ENCODE measurements at regions of chr7 and their contacts with region 1.

Region 1: GRCh38 chr7:77759294-77759889 is 38.8 kb downstream of the TMEM60 start:
- DNase-seq: peak; percentile 66
- H3K4me3 Mint-ChIP-seq: no peak overlapping the region
- H3K27ac Mint-ChIP-seq: no peak overlapping the region
- H3K4me1 Mint-ChIP-seq: peaks cover 12% of the 10 kb centered on the region
- H3K27me3 Mint-ChIP-seq: no peaks in the 10 kb centered on the region

Region 2: DNA sequence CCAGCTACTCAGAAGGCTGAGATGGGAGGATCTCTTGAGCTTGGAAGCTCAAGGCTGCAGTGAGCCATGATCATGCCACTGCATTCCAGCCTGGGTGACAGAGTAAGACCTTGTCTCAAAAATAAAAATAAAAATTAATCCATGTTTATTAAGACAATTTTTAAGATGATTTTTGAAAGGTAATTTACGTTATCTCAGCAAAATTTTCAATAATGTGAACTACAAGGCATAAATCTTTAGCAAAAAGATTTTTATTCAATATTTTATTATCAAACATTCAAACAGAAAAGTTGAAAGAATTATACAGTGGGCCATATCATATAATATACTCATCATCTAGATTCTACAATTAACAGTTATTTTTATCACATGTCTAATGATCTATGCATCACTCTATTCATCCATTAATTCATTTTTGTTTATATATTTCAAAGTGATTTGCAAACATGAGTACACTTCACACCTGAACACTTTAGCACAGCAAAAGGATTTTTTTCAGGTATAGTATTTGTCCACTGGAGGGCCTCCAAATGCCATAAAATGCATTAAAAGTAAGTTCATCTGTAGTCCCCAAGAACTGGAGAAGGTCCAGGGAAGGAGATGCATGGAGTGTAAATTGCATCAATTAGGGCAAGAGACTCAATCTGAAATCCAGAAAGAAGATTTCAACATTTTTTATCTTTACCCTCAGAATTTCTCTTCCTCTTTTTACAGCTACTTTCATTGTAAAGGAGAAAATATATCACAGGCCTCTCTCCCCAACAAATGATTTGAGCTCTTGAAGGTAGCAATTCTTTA is 101.8 kb before region 1 on chr7:
- CTCF ChIA-PET with region 1: interaction called, 49 read pairs
- POLR2A ChIA-PET with region 1: interaction called, 7 read pairs
- DNase-seq: no peak
- H3K4me3 Mint-ChIP-seq: no peak overlapping the region
- H3K27ac Mint-ChIP-seq: no peak overlapping the region
- H3K4me1 Mint-ChIP-seq: no peaks in the 10 kb centered on the region
- H3K27me3 Mint-ChIP-seq: no peaks in the 10 kb centered on the region

Region 3: DNA sequence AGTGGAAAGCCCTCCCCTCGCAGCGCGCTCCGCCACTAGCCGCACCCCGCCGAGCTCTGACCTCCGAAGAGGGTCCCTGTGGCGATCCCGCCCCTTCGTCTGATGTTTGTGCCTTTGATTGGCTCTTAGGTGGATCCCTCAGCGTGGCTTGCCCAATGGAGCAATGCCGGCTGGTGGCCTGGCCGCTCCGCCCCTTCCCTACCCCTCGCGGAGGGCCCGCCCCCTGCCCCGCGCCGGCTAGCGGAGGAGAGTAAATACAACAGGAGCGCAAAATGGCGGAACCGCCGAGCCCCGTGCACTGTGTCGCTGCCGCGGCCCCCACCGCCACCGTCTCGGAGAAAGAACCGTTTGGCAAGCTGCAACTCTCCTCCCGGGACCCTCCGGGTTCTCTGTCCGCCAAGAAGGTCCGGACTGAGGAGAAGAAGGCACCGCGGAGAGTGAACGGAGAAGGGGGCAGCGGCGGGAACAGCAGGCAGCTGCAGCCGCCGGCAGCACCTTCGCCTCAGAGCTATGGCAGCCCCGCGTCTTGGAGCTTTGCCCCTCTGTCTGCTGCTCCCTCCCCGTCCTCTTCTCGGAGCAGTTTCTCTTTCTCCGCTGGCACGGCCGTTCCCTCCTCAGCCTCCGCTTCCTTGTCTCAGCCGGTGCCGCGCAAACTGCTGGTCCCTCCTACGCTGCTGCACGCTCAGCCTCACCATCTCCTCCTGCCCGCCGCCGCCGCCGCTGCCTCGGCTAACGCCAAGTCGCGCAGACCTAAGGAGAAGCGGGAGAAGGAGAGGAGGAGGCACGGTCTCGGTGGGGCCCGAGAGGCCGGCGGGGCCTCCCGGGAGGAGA is 63.0 kb before region 1 on chr7 and contains the start of gene RSBN1L:
- CTCF ChIA-PET with region 1: interaction called, 16 read pairs
- POLR2A ChIA-PET with region 1: interaction called, 3 read pairs
- DNase-seq: peak; percentile 99
- H3K4me3 Mint-ChIP-seq: peak within 1 kb of the TSS; percentile 98
- H3K27ac Mint-ChIP-seq: peak within 1 kb of the TSS; percentile 94
- H3K4me1 Mint-ChIP-seq: peaks cover 51% of the 10 kb centered on the region
- H3K27me3 Mint-ChIP-seq: no peaks in the 10 kb centered on the region
- total RNA-seq, gene RSBN1L: 28.7 to 29.5 TPM

Measured in activated CD4-positive, alpha-beta memory T cell treated with anti-CD3 and anti-CD28 coated beads, Interleukin-2, amount 10 ng/mL, durations not matched to agents 7 days and 5 days (primary cell).